Mammary epithelial cell (primary cell): ENCODE measurements at regions of chr4 and their contacts with region 1.

Region 1: GRCh38 chr4:112296949-112297880 is at the start of gene ALPK1:
- DNase-seq: peak; percentile 84
- H3K4me3 ChIP-seq: peak within 1 kb of the TSS; percentile 49 to 87 (median 61)
- H3K27ac ChIP-seq: peak within 1 kb of the TSS; percentile 75
- H3K4me1 ChIP-seq: no peaks in the 10 kb centered on the region
- H3K27me3 ChIP-seq: no peaks in the 10 kb centered on the region
- CTCF ChIP-seq: no peak
- total RNA-seq, gene ALPK1: 19.0 to 24.3 TPM

Region 2: DNA sequence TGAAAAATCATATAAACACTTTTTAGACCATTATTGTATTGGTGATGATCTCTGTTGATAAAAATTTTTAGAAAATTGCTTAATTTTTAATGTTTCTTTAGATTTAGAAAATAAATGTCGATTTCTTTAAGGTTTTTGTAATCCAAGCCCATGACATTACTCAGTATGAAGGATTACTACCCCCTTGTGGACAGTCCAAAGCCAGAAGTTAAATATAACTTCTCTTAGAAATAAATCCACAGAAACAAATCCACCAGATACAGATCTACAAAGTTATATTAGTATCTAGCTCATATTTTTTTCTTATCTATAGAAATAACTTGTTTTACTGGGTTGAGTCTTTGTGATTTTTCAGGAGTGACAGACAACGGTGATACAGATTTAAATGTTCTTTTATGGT is 30.4 kb before region 1 on chr4:
- CTCF ChIA-PET with region 1: no interaction called
- dilution Hi-C with region 1: no loop called
- in situ Hi-C with region 1: no loop called
- intact Hi-C with region 1: no loop called
- DNase-seq: peak; percentile 14
- H3K4me3 ChIP-seq: no peak overlapping the region
- H3K27ac ChIP-seq: no peak overlapping the region
- H3K4me1 ChIP-seq: peaks cover 14% of the 10 kb centered on the region
- H3K27me3 ChIP-seq: no peaks in the 10 kb centered on the region
- CTCF ChIP-seq: peak; percentile 44 to 46

Region 3: DNA sequence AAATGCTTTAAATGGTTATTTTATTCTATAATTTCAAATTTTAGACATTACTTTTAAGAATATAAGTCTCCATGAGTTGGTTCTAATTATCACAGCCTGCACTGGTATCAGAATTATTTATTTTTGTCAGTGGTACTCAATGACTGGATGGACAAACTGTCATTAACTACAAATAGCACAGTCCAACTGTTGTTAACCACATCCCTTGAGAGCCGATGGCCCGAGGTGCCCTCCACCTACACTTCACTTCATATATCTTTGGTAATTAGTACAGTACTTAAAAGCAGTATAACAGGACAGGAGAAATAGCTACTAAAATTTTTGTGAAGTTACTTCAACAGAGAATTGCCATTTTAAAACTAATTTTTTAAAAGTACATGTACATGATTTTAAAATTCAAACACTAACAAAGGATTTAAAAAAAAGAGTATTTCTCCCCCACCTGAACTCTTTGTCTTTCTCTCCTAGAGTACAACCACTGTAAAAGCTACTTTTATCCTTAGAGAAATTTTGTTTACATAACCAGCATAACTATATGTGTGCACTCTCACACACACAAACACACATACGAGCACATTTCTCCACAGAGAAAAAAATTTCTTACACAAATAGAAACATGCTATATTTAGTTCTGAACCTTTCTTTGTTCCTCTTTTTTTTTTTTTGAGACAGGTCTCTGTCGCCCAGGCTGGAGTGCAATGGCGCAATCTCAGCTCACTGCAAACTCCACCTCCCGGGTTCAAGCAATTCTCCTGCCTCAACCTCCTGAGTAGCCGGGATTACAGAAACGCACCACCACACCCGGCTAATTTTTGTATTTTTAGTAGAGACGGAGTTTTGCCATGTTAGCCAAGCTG is 18.0 kb before region 1 on chr4:
- CTCF ChIA-PET with region 1: interaction called, 32 read pairs
- dilution Hi-C with region 1: no loop called
- in situ Hi-C with region 1: no loop called
- intact Hi-C with region 1: no loop called
- DNase-seq: no peak
- H3K4me3 ChIP-seq: peak overlapping the region; percentile 35 to 40 (median 38)
- H3K27ac ChIP-seq: peak overlapping the region; percentile 36
- H3K4me1 ChIP-seq: peaks cover 38% of the 10 kb centered on the region
- H3K27me3 ChIP-seq: no peaks in the 10 kb centered on the region
- CTCF ChIP-seq: no peak

Region 4: GRCh38 chr4:112361181-112361791 is 64.1 kb after region 1 on chr4:
- CTCF ChIA-PET with region 1: no interaction called
- dilution Hi-C with region 1: no loop called
- in situ Hi-C with region 1: no loop called
- intact Hi-C with region 1: no loop called
- DNase-seq: peak; percentile 57
- H3K4me3 ChIP-seq: no peak overlapping the region
- H3K27ac ChIP-seq: no peak overlapping the region
- H3K4me1 ChIP-seq: no peaks in the 10 kb centered on the region
- H3K27me3 ChIP-seq: no peaks in the 10 kb centered on the region
- CTCF ChIP-seq: no peak